Caco-2 (cell line): ENCODE measurements at regions of chr21 and their contacts with region 1.

Region 1: GRCh38 chr21:15638856-15639549 is 90.8 kb upstream of the USP25 start:
- DNase-seq: peak; percentile 83 to 91
- H3K4me3 ChIP-seq: no peak overlapping the region
- H3K4me3 Mint-ChIP-seq: peak overlapping the region; percentile 56
- H3K27ac Mint-ChIP-seq: peak overlapping the region; percentile 89
- H3K4me1 ChIP-seq: peaks cover 58% of the 10 kb centered on the region
- H3K4me1 Mint-ChIP-seq: peaks cover 38% of the 10 kb centered on the region
- H3K27me3 ChIP-seq: no peaks in the 10 kb centered on the region
- H3K27me3 Mint-ChIP-seq: no peaks in the 10 kb centered on the region
- CTCF ChIP-seq: no peak

Region 2: DNA sequence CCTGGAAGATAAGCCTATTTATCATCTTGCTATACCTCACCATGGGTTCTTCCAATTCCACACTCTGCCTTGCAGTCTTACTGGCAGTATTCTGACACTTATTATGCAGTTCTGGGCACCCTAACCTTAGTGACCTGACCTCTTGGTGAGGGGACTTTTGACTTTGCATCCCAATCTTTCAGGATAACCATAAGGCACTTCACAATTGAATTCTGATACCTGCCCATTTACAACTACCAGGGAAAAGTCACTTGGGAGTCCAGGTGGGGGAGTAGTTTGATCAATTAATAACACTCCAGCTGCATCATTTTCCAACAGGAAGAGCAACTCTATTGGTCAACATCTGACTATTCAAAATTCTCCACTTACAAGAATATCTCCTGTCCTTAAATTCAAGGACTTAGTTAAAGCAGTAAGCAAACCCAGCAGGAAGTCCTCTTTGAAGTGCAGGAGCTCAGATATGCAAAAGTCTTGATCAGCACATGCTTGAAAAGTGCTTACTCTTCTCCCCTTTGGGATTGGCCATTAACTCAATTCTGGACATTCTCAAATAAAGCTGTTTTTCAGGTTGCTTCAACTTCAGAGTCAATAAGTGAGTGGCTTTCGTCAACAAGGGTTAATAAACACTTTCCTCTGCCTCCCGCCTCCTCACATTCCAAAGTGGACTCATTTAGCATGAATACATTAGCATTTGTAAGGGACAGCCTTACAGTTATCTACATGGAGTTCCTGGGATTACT is 396.8 kb before region 1 on chr21:
- CTCF ChIA-PET with region 1: no interaction called
- POLR2A ChIA-PET with region 1: no interaction called
- intact Hi-C with region 1: no loop called
- DNase-seq: peak in 1 of 2 experiments; percentile 6
- H3K4me3 ChIP-seq: no peak overlapping the region
- H3K4me3 Mint-ChIP-seq: no peak overlapping the region
- H3K27ac Mint-ChIP-seq: no peak overlapping the region
- H3K4me1 ChIP-seq: peaks cover 5% of the 10 kb centered on the region
- H3K4me1 Mint-ChIP-seq: peaks cover 10% of the 10 kb centered on the region
- H3K27me3 ChIP-seq: no peaks in the 10 kb centered on the region
- H3K27me3 Mint-ChIP-seq: no peaks in the 10 kb centered on the region
- CTCF ChIP-seq: no peak

Region 3: GRCh38 chr21:15617964-15618363 is 21.0 kb before region 1 on chr21:
- CTCF ChIA-PET with region 1: no interaction called
- POLR2A ChIA-PET with region 1: no interaction called
- intact Hi-C with region 1: no loop called
- DNase-seq: peak in 1 of 2 experiments; percentile 38
- H3K4me3 ChIP-seq: no peak overlapping the region
- H3K4me3 Mint-ChIP-seq: no peak overlapping the region
- H3K27ac Mint-ChIP-seq: peak overlapping the region; percentile 39
- H3K4me1 ChIP-seq: peaks cover 5% of the 10 kb centered on the region; the same call in 1 of the 2 replicates
- H3K4me1 Mint-ChIP-seq: peaks cover 18% of the 10 kb centered on the region
- H3K27me3 ChIP-seq: no peaks in the 10 kb centered on the region
- H3K27me3 Mint-ChIP-seq: no peaks in the 10 kb centered on the region
- CTCF ChIP-seq: no peak

Region 4: DNA sequence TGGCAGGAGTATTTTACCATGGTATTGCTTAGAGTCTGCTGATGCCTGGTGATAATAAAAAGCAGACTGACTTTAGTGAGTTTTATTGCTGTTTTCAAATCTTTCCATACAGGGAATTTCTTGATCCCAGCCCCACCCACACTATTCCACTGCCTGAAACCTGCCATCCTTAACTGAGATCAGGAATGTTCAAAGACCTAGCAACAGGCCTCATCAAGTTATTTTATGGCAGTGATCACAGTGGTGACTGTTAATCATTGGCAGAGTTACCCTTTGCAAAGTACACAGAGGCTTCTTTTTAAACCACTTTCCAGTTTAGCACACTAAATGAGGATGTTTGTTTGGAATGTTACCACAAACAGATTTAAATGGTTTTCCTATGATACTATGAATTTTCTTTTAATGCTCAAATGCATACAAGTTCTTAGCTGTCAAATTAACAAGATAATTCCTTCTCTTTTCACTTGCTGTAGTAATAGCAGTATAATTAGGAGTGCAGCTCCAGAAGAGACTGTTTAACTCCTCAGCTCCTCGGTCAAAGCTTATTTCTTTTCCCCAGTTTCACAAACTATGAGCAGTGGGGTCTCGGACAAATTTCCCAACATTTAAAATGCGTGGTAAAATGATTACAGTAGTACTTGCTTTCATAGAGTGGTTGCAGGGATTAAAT is 20.9 kb after region 1 on chr21:
- CTCF ChIA-PET with region 1: no interaction called
- POLR2A ChIA-PET with region 1: no interaction called
- intact Hi-C with region 1: loop called (anchors 1 kb)
- DNase-seq: peak; percentile 72 to 78
- H3K4me3 ChIP-seq: peak overlapping the region; percentile 5; the same call in 1 of the 2 replicates
- H3K4me3 Mint-ChIP-seq: peak overlapping the region; percentile 67
- H3K27ac Mint-ChIP-seq: peak overlapping the region; percentile 95
- H3K4me1 ChIP-seq: peaks cover 34% of the 10 kb centered on the region
- H3K4me1 Mint-ChIP-seq: peaks cover 32% of the 10 kb centered on the region
- H3K27me3 ChIP-seq: no peaks in the 10 kb centered on the region
- H3K27me3 Mint-ChIP-seq: no peaks in the 10 kb centered on the region
- CTCF ChIP-seq: no peak